ENCODE measurements at regions of chr16 and their contacts with region 1.

Region 1: DNA sequence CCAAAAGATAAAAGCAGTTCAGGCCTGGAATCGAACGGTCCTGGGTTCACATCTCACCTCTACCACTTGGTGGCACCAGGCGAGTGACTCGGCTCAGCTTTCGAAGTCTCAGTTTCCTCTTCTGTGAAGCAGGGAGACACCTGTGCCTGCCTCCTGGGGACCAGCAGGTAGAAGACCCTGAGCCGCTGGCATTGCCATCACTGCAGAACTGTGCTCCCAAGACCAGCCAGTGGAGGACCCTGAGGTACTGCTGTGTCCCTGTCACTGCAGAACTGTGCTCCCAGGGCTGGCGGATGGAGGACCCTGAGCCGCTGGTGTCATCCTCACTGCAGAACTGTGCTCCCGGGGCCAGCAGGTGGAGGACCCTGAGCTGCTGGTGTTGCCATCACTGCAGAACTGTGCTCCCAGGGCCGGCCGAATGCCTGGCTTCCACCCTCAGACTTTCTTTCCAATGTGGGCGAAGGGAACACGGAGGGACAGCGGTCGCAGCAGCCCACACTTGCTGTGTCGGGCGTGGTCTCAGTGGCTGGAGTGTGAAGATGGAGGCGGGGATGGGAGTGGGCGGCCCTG is 8.7 kb upstream of the SLC7A5 start:
- DNase-seq: no peak
- H3K4me3 ChIP-seq: no peak overlapping the region
- H3K27ac ChIP-seq: no peak overlapping the region
- H3K4me1 ChIP-seq: no peaks in the 10 kb centered on the region
- H3K27me3 ChIP-seq: no peaks in the 10 kb centered on the region
- CTCF ChIP-seq: peak in 2 of 6 experiments; percentile 19 to 23
- POLR2A ChIP-seq: no peak

Region 2: DNA sequence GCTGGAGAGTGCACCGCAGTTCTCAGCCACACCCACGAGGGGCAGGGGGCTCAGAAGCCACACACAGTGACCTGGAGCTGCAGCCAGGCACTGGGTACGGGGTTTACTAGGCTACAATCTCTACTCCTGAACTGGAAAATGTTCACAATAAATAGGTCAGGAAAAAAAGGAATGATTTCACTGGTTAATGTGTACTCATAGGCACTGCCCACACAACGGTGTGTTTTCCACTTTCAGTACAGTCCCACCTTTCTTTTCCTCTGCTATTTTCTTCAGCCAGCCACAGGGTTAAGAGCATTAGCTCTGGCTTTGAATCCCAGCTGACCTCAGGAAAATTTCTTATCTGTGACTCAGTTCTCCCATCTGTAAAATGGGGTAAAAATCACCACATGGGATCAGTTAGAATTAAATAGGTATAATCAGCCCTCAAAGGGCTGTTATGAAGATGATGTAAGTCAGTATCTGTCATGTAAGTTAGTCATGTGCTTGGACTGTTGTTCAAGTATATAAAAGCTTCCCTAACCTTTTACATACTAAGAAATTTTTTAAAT is 420.9 kb before region 1 on chr16:
- intact Hi-C with region 1: no loop called
- DNase-seq: no peak
- H3K4me3 ChIP-seq: no peak overlapping the region
- H3K27ac ChIP-seq: peak overlapping the region in 3 of 5 donors; percentile 14 to 65 (median 17)
- H3K4me1 ChIP-seq: peaks cover 4 to 21% of the 10 kb centered on the region in 2 donors
- H3K27me3 ChIP-seq: no peaks in the 10 kb centered on the region
- CTCF ChIP-seq: no peak
- POLR2A ChIP-seq: no peak

Region 3: DNA sequence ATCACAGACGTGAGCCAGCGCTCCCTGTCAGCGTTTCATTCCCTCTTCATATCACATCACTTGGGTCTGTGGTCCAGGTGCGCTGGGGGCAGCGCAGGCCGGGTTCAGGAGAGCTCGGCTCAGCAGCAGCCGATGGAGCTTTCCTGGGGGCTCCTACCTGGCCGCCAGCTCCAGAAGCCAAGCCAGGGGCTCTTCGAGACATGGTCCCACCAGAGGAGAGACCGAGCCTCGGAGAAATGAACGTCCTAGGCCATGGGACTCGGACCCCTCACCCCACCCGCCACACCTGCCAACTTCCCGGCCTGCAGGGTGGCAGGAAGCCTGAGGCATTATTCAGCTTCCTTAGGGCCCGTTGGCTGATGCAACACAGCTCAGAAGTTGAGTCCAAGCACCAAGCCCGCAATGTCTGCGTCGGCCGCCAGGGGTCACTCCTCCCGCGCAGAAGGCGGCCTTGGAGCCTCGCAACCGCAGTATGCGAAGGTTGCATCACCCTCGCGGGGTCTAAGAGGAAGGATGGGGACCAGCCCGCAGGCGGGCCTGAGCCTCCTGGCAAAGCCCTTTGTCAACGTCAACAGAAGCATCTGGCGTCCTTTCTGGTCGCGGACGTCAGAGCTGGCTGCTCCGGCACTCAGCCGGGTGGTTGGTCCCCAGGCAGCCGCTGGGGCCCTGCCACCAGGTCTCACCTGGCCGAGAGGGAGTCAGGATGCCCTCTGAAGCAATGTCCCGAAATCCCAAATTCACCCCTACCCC is 99.0 kb before region 1 on chr16:
- intact Hi-C with region 1: loop called in 1 of 2 experiments (anchors 5 kb)
- DNase-seq: peak; percentile 84 to 96 (median 86)
- H3K4me3 ChIP-seq: no peak overlapping the region
- H3K27ac ChIP-seq: no peak overlapping the region
- H3K4me1 ChIP-seq: peaks cover 0 to 7% of the 10 kb centered on the region in 2 donors
- H3K27me3 ChIP-seq: no peaks in the 10 kb centered on the region
- CTCF ChIP-seq: peak; percentile 94 to 99 (median 98)
- POLR2A ChIP-seq: no peak

Region 4: DNA sequence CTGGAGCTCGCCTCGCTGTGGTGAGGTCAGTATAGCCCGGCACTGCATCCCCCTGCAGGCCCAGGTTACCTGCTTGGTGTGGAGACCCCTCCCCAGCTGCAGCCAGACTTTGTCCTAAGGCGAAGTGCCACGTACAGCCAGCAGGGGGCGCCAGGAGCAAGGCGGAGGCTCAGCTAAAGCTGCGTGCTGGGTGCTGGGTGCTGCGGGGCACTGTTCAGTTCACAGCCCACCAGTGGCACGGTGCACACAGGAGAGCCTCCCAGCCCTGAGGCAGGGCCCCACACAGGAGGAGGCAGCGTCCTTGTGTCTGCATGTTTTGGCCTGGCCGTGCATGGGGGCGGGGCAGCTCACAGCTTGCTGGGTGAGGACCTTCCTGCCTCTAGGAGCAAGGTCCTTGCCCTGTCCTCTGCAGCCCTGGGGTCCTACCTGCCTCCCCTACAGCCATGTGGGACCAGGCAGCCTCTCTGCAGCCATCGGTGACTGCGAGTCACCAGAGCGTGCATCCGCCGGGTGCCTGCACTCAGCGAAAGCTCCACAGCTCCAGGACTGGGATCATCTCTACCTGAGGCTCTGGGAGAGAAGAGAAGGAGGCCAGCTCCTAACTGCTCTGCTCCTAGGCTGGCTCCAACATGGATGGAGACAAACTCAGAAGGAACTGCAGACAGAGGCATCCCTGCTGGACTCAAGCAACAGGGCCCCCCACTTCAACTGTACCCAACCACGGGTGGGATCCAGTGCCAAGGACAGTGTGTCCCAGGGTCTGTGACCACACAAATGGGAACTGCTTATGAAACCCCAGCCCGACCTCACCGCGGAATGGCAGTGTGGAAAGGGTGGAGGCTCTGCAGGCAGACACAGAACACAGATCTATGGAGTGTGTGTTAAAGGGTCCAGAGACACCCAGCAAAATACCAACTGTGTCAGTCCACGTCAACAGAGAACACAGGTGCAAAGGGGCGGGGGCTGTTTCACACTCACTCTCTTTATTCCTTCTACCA is 27.7 kb before region 1 on chr16:
- intact Hi-C with region 1: loop called in 1 of 2 experiments (anchors 2 kb)
- DNase-seq: peak; percentile 45 to 75 (median 63)
- H3K4me3 ChIP-seq: no peak overlapping the region
- H3K27ac ChIP-seq: no peak overlapping the region
- H3K4me1 ChIP-seq: peaks cover 9 to 21% of the 10 kb centered on the region in 2 donors
- H3K27me3 ChIP-seq: no peaks in the 10 kb centered on the region
- CTCF ChIP-seq: peak; percentile 87 to 93 (median 89)
- POLR2A ChIP-seq: no peak

Region 5: GRCh38 chr16:87914812-87915211 is 36.8 kb after region 1 on chr16:
- intact Hi-C with region 1: loop called in 1 of 2 experiments (anchors 5 kb)
- DNase-seq: no peak
- H3K4me3 ChIP-seq: no peak overlapping the region
- H3K27ac ChIP-seq: no peak overlapping the region
- H3K4me1 ChIP-seq: peaks cover 14 to 15% of the 10 kb centered on the region in 2 donors
- H3K27me3 ChIP-seq: no peaks in the 10 kb centered on the region
- CTCF ChIP-seq: no peak
- POLR2A ChIP-seq: no peak

Measured in adrenal gland (tissue), 19 donors.